ENCODE measurements at regions of chr11 and their contacts with region 1.

Region 1: DNA sequence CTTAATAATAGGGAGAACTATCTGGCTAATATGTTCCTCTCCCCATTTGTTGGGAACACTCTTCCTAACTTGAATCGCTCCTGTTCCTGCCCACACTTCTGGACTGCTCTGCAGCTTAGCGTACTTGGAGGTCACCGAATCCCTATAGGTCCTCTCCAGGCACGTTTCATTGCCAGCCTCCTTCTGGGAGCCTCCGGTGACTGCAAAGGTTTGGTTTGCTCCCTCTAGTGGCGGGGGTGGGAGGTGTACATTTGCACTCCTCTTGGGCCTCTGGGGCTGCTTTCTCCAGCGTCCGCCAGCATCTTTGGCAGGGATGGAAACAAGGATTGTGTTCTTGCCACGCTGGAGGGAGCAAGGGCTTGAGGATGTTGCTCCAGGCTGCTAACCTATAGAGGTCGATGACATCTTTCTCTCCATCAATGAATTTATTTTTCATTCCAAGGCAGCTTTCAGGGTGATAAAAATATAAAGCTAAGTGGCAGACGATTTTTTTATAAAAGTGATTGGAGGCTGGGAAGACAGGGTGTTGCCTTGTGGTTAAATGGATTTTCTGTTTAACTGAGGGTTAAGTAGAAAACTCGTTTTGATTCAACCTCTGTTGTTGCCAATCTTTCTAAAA is 48.7 kb downstream of the TSPAN18 start:
- DNase-seq: peak; percentile 69
- CTCF ChIP-seq: peak; percentile 65

Region 2: GRCh38 chr11:44556735-44557409 is 218.6 kb before region 1 on chr11:
- CTCF ChIA-PET with region 1: interaction called, 14 read pairs
- POLR2A ChIA-PET with region 1: no interaction called
- DNase-seq: no peak
- CTCF ChIP-seq: peak; percentile 88

Region 3: GRCh38 chr11:44743959-44744557 is 31.4 kb before region 1 on chr11:
- CTCF ChIA-PET with region 1: interaction called, 14 read pairs
- POLR2A ChIA-PET with region 1: no interaction called
- DNase-seq: no peak
- CTCF ChIP-seq: no peak

Region 4: GRCh38 chr11:44760917-44761550 is 14.4 kb before region 1 on chr11:
- CTCF ChIA-PET with region 1: interaction called, 84 read pairs
- POLR2A ChIA-PET with region 1: no interaction called
- DNase-seq: no peak
- CTCF ChIP-seq: no peak

Region 5: GRCh38 chr11:44785856-44786606 is 10.6 kb after region 1 on chr11:
- CTCF ChIA-PET with region 1: interaction called, 23 read pairs
- POLR2A ChIA-PET with region 1: no interaction called
- DNase-seq: no peak
- CTCF ChIP-seq: no peak

Region 6: DNA sequence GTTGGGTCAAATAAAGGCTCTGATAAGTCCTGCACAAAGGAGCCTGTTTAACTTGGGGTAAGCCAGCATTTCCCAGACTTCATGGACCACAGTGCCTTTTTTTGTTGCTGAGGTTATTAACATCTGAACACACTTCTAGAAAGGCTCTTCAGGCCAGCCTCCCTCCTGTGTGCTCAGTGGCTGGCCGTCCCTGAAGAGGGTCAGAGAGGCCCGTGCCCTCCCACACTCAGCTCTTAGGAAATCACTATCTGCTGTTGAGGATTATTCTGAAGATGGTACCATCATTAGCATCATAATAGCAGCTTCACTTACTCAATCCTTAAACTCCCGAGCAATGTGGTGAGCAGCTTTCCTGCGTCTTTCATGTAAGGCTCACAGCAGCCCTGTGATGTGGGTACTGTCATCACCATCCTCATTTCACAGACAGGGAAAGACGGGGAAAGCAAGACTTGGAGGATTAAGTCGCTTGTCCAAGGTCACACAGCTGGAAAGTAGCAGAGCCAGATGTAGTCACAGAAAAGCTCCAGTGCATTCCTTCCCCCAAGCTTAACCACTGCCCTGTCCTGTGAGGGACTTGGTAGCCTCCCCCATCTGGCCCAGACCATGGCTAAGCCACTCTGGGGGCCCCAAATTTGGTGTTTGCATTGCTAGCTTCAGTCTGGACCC is 22.6 kb after region 1 on chr11:
- CTCF ChIA-PET with region 1: interaction called, 13 read pairs
- POLR2A ChIA-PET with region 1: no interaction called
- DNase-seq: no peak
- CTCF ChIP-seq: no peak

Region 7: GRCh38 chr11:44893846-44894617 is 118.6 kb after region 1 on chr11:
- CTCF ChIA-PET with region 1: interaction called, 17 read pairs
- POLR2A ChIA-PET with region 1: no interaction called
- DNase-seq: peak; percentile 78
- CTCF ChIP-seq: peak; percentile 82

Region 8: DNA sequence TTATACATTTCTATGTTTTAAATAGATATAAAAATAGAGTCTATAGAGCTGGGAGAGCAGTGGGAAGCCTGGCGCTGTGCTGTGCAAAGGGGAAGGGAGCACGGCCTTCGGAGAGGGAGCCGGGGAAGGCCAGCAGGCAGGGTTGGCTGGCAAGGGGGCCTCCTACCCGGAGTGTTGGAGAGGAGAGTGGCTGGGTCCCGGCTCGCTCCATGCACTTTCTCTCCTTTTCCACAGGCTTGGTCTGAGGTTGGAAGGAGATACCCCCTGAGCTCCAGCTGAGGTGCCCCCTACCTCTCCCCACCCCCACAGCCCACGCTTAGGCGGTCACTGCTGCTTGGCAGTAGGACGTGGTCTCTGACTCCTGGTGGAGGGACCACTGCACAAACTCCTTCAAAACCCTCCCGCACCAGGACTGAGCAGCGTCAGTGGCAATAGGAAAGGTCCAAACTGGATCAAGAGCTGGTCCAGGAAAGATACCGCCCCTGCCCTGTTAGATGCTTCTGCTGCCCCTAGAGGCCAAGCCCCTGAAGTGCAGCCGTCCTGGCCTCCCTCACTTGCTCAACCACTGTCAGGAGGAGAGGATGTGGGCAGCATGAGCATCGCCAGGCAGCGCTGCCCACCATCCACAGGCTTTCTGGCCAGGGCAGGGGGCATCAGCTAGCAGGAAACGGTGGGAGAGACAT is 457.8 kb after region 1 on chr11:
- CTCF ChIA-PET with region 1: no interaction called
- POLR2A ChIA-PET with region 1: no interaction called
- DNase-seq: peak; percentile 86
- CTCF ChIP-seq: peak; percentile 85

Measured in GM10248 (cell line).